HepG2 (cell line): ENCODE measurements at regions of chr10 and their contacts with region 1.

Region 1: GRCh38 chr10:63465293-63466143 is at the start of gene JMJD1C:
- DNase-seq: peak; percentile 62
- ATAC-seq: peak; percentile 88
- H3K4me3 ChIP-seq: peak within 1 kb of the TSS; percentile 78 to 98 (median 96)
- H3K27ac ChIP-seq: peak within 1 kb of the TSS; percentile 97
- H3K4me1 ChIP-seq: peaks cover 49% of the 10 kb centered on the region
- H3K27me3 ChIP-seq: no peaks in the 10 kb centered on the region; a peak in 1 of 5 replicates
- CTCF ChIP-seq: peak; percentile 57
- EP300 ChIP-seq: peak; percentile 30 to 56; a peak in 2 of 4 replicates
- POLR2A ChIP-seq: peak; percentile 70 to 83
- RAD21 ChIP-seq: peak; percentile 71
- total RNA-seq, gene JMJD1C: 42.7 and 51.4 TPM in 2 replicates

Region 2: GRCh38 chr10:63120554-63120953 is 345.0 kb before region 1 on chr10:
- CTCF ChIA-PET with region 1: no interaction called
- POLR2A ChIA-PET with region 1: no interaction called
- in situ Hi-C with region 1: no loop called
- intact Hi-C with region 1: no loop called
- DNase-seq: no peak
- ATAC-seq: no peak
- H3K4me3 ChIP-seq: no peak overlapping the region
- H3K27ac ChIP-seq: no peak overlapping the region
- H3K4me1 ChIP-seq: peaks cover 9% of the 10 kb centered on the region
- H3K27me3 ChIP-seq: no peaks in the 10 kb centered on the region
- CTCF ChIP-seq: no peak
- EP300 ChIP-seq: no peak
- POLR2A ChIP-seq: no peak
- RAD21 ChIP-seq: no peak

Region 3: DNA sequence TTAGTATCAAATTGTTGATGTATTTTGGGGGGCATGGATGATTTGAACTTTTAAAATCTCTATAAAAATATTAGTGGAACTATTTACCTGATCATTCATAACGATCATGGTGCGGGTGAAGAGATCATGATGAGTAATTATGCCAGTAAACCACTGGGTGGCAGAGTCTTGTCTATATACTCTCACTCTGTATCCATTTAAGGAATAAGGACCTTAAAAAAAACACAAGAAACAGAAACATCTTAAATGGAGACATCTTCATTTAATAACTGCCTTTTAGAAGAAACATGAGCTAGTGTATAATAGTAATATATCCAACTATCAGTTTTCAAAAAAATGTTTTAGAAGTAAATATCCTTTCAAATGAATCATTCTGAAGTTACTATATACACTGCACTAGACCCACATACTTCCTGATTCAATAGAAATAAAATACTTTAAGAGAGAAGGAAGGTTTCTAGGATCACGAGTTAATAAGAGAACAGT is 248.4 kb before region 1 on chr10:
- CTCF ChIA-PET with region 1: no interaction called
- POLR2A ChIA-PET with region 1: no interaction called
- in situ Hi-C with region 1: no loop called
- intact Hi-C with region 1: loop called (anchors 10 kb)
- DNase-seq: peak; percentile 44
- ATAC-seq: peak; percentile 88
- H3K4me3 ChIP-seq: no peak overlapping the region
- H3K27ac ChIP-seq: no peak overlapping the region
- H3K4me1 ChIP-seq: no peaks in the 10 kb centered on the region
- H3K27me3 ChIP-seq: no peaks in the 10 kb centered on the region; a peak in 1 of 5 replicates
- CTCF ChIP-seq: peak; percentile 57
- EP300 ChIP-seq: no peak
- POLR2A ChIP-seq: no peak
- RAD21 ChIP-seq: no peak

Region 4: DNA sequence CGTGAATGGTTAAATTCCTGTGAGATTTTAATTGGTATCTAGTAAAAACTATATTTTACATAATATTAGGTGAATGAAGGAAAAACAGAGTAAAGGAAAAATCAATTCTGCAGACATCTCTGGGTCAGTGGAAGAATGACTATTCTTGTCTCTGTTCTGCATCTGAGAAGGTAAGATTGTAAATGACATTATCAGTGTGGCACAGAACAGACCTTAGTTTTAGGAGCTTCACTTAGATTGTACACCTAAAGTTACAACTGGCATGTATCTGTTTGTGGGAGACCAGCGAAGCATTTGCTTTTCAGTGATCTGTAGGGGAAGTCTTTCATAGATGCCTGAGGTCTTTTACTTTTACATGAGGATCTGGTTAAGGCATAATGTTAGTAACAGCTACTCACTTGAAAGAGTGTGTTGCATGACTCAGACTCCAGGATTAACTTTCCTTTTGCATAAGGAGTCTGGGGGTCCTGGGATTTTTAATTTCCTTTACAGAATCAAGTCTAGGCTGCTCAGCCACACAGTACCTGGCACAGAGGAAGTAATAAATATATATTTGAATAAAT is 56.0 kb before region 1 on chr10:
- CTCF ChIA-PET with region 1: no interaction called
- POLR2A ChIA-PET with region 1: no interaction called
- in situ Hi-C with region 1: no loop called
- intact Hi-C with region 1: no loop called
- DNase-seq: no peak
- ATAC-seq: no peak
- H3K4me3 ChIP-seq: no peak overlapping the region
- H3K27ac ChIP-seq: no peak overlapping the region
- H3K4me1 ChIP-seq: no peaks in the 10 kb centered on the region
- H3K27me3 ChIP-seq: no peaks in the 10 kb centered on the region
- CTCF ChIP-seq: no peak
- EP300 ChIP-seq: no peak
- POLR2A ChIP-seq: no peak
- RAD21 ChIP-seq: no peak

Region 5: DNA sequence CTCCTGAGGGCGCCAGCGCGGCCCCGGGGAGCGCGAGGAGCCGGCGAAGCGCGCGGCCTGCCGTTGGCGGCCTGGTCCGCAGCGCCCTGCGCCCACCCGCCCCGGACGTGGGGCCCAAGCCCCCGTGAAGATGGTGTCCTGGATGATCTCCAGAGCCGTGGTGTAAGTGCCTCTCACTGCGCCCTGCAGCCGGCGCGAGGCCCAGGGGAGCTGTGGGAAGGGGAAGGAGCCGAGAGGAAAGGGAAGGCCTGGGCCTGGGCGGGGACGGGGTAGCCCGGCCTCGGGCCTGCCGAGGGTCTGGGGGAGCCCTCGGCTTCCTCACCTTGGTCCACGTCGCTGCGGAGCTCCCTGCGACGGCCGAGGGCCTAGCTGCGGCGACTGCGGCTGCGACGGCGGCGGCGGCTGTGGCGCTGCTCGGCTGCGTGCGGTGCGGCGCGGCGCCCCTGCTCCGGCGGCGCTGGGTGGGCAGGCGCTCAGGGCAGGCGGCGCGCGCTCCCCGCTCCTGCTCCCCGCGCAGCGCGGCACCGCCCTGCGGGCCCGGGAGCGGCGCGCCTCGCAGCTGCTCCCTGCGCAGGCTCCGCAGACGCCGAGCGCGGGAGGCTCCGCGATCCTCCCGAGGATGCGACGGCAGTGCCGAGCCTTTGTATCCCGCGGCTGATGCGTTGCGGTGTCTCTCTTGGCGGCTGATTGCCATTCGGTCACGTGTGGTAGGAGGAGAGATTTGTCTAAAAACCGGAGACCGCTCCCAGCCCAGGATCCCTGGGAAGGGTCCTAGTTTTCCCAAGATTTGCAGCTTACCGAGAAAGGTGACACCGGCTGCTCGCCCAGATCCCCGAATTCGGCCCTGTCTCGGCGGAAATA is 56.1 kb after region 1 on chr10:
- CTCF ChIA-PET with region 1: no interaction called
- POLR2A ChIA-PET with region 1: no interaction called
- in situ Hi-C with region 1: no loop called
- intact Hi-C with region 1: loop called (anchors 1 kb)
- DNase-seq: peak; percentile 46
- ATAC-seq: peak; percentile 89
- H3K4me3 ChIP-seq: peak overlapping the region; percentile 74 to 94 (median 87)
- H3K27ac ChIP-seq: peak overlapping the region; percentile 99
- H3K4me1 ChIP-seq: peaks cover 76% of the 10 kb centered on the region
- H3K27me3 ChIP-seq: no peaks in the 10 kb centered on the region
- CTCF ChIP-seq: no peak
- EP300 ChIP-seq: peak in 1 of 2 experiments; percentile 32; a peak in 1 of 4 replicates
- POLR2A ChIP-seq: peak; percentile 65
- RAD21 ChIP-seq: peak; percentile 47

Region 6: GRCh38 chr10:63583909-63584724 is 118.6 kb after region 1 on chr10:
- CTCF ChIA-PET with region 1: no interaction called
- POLR2A ChIA-PET with region 1: no interaction called
- in situ Hi-C with region 1: no loop called
- intact Hi-C with region 1: no loop called
- DNase-seq: no peak
- ATAC-seq: no peak
- H3K4me3 ChIP-seq: no peak overlapping the region
- H3K27ac ChIP-seq: no peak overlapping the region
- H3K4me1 ChIP-seq: peaks cover 8% of the 10 kb centered on the region; the same call in 1 of the 2 replicates
- H3K27me3 ChIP-seq: no peaks in the 10 kb centered on the region
- CTCF ChIP-seq: no peak
- EP300 ChIP-seq: no peak
- POLR2A ChIP-seq: no peak
- RAD21 ChIP-seq: no peak

Region 7: DNA sequence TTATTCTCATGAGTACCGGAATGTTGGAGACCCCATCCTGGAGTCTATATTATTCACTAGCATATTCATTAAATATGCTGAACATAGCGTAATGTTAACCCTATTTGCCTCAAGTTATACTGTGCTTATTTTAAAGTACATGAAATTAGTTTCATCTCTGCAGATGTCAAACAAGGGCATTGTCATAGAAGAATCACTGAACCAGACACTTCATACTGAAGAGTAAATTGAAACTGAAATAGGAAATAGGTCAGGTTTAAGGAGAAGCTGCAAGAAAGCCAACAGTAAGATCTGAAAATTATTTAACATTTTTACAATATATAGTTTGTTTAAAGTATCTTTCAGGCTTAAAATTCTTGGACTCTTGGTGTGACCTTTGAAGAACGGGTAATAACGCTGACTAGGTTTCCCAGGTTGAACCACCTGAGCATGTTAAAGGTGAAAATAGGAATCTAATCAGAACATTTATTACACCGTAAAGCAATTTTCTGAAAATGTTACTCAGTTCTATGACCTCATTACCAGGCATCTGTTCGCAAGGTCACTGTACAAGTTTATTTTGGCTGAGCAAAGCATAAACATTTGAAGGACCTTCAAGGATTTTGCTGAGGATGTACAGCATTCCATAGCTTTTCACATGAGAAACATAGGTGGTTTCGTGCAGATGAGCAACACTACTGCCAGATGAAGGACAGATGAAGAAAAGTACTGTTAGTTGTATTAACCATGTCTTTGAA is 138.4 kb after region 1 on chr10:
- CTCF ChIA-PET with region 1: no interaction called
- POLR2A ChIA-PET with region 1: no interaction called
- in situ Hi-C with region 1: no loop called
- intact Hi-C with region 1: no loop called
- DNase-seq: no peak
- ATAC-seq: no peak
- H3K4me3 ChIP-seq: no peak overlapping the region
- H3K27ac ChIP-seq: no peak overlapping the region
- H3K4me1 ChIP-seq: no peaks in the 10 kb centered on the region
- H3K27me3 ChIP-seq: no peaks in the 10 kb centered on the region
- CTCF ChIP-seq: no peak
- EP300 ChIP-seq: no peak
- POLR2A ChIP-seq: no peak
- RAD21 ChIP-seq: no peak